Activated CD4-positive, alpha-beta T cell treated with anti-CD3 and anti-CD28 coated beads, Interleukin-2, amount 10 ng/mL, durations not matched to agents 24 days and 14 days (primary cell): ENCODE measurements at regions of chr16 and their contacts with region 1.

Region 1: GRCh38 chr16:28950648-28951409 is at the start of gene NFATC2IP:
- DNase-seq: peak; percentile 100
- H3K4me3 Mint-ChIP-seq: peak within 1 kb of the TSS; percentile 93
- H3K27ac Mint-ChIP-seq: peak within 1 kb of the TSS; percentile 94
- H3K4me1 Mint-ChIP-seq: peaks cover 27% of the 10 kb centered on the region
- H3K27me3 Mint-ChIP-seq: no peaks in the 10 kb centered on the region
- total RNA-seq, gene NFATC2IP: 108 and 112 TPM in 2 replicates

Region 2: DNA sequence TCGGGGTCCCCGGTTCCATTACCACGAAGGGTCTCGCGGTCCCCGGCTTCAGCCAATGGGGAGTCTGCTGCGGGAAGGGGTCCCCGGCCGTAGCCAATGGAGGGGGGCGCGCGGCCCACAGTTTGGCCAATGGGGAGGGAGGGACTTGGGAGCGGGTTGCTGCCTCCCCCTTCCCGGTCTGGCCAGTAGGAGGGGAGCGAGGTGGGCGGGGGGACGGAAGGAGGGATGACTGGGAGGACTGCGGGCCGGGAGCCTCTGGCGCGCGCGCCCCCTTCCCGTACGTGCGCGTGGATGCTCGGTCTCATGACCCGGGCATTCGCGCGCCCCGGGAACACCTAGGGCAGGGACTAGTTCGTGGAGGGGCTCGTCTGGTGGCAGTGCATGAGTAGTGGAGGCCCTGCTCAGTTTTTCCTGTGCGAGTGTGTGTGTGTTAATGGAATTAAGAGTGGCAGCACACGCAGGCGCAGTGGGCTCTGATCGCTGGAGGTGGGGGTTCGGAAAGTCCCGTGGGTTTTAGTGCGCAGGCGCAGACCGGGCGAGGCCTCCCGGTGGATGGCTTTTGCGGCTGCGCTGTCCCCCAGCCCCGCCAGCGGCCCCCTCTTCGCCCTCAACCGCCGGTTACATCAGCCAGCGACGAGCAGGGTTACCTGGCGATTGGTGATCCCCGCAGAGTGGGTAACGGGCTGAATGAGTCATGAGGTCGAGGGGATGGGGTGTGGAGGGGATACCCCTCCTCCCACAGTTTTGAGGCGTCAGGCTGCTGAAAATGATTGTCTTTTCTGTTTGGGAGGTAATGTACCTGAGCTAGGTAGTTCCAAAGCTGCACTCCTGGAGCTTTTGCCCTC is 126.7 kb before region 1 on chr16:
- intact Hi-C with region 1: loop called (anchors 1 kb)
- DNase-seq: peak; percentile 98
- H3K4me3 Mint-ChIP-seq: peak overlapping the region; percentile 100
- H3K27ac Mint-ChIP-seq: peak overlapping the region; percentile 100
- H3K4me1 Mint-ChIP-seq: peaks cover 47% of the 10 kb centered on the region
- H3K27me3 Mint-ChIP-seq: peaks cover 2% of the 10 kb centered on the region

Region 3: GRCh38 chr16:28902909-28903308 is 47.9 kb before region 1 on chr16:
- intact Hi-C with region 1: no loop called
- DNase-seq: no peak
- H3K4me3 Mint-ChIP-seq: no peak overlapping the region
- H3K27ac Mint-ChIP-seq: no peak overlapping the region
- H3K4me1 Mint-ChIP-seq: peaks cover 2% of the 10 kb centered on the region
- H3K27me3 Mint-ChIP-seq: no peaks in the 10 kb centered on the region

Region 4: GRCh38 chr16:28935924-28936783 is 14.7 kb before region 1 on chr16:
- intact Hi-C with region 1: loop called (anchors 1 kb)
- DNase-seq: peak; percentile 97
- H3K4me3 Mint-ChIP-seq: peak overlapping the region; percentile 78
- H3K27ac Mint-ChIP-seq: peak overlapping the region; percentile 77
- H3K4me1 Mint-ChIP-seq: peaks cover 19% of the 10 kb centered on the region
- H3K27me3 Mint-ChIP-seq: peaks cover 2% of the 10 kb centered on the region